ENCODE measurements at regions of chr5 and their contacts with region 1.

Region 1: DNA sequence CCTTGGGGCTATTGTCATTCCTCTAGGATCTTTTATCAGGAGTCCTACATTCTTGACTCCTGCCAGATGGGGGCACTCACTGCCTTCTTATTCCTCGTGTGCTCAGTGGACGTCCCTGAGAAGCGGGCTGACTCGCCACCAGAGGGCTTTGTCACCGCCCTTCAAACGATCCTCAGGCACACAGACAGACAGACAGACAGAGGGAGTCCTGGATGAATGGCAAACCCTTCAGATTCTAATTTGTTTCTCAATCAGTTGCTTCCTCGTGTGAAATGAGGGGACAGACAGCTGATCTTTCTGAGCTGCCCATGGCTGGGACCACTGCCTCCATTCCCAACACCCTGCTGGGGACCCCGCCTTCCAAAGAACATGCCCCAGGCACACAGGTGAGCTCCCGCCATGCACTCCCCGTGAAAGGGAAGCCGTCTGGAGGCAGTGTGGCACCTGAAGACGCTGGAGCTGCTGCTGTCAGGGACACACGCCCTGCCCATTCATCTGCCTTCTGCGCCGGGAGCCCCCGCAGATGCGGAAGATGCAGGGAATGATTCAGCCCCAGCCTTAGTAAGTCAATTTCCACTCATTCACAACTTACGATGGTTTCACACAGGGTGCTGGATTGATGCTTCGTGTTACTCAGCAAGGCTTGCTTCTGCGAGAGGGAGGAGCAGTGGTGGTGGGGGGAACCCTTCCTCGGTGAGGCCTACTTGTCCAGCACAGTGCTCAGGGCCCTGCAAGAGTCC is 24.9 kb upstream of the SH3PXD2B start:
- DNase-seq: peak; percentile 82 to 89
- H3K4me3 ChIP-seq: no peak overlapping the region
- H3K27ac ChIP-seq: peak overlapping the region; percentile 7 to 30
- H3K4me1 ChIP-seq: peaks cover 0 to 5% (median 0%) of the 10 kb centered on the region in 4 donors
- H3K27me3 ChIP-seq: no peaks in the 10 kb centered on the region
- CTCF ChIP-seq: peak; percentile 83 to 99

Region 2: DNA sequence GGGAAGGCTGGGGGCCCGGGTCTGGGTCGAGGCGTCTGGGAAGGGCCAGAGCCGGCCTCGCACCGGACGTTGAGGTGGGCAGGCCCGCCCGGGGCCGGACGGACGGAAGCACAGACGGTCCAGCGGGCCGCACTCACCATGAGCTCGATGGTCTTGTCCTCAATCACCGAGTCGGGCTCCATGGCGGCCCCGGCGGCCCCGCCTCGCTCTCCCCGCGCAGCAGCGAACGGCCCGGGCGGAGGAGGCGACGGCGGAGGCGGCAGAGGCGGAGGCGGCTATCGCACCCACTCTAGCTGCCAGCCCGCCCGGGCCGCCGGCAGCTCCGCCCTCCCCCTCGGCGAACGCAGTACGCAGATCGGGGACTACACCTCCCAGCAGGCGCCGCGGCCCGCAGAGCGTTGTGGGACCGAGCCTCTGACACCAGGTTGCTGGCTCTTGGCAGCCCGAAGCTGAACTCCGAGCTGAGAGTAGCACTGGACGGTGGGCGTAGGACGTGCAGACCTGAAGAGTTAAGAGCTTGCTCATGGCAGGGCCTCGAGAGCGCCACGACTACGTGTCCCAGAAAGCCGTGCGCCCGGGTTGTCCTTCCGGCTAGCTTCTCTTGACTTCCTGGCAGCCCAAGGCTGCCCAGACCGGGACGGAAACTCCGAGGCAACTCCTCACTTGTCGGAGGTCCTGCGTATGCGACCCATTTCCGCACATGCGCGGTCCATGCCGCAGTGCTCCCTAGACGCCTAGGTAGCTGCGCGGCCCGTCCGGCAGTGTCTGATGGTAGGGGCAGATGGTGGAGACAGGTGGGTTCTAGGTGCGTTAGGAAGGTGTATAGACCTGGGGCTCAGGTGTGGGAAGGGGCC is 472.7 kb before region 1 on chr5 and contains the start of gene FBXW11:
- intact Hi-C with region 1: no loop called
- DNase-seq: peak; percentile 97
- H3K4me3 ChIP-seq: peak within 1 kb of the TSS; percentile 92 to 97
- H3K27ac ChIP-seq: peak within 1 kb of the TSS; percentile 98
- H3K4me1 ChIP-seq: peaks cover 0 to 46% (median 36%) of the 10 kb centered on the region in 4 donors
- H3K27me3 ChIP-seq: no peaks in the 10 kb centered on the region
- CTCF ChIP-seq: no peak

Region 3: DNA sequence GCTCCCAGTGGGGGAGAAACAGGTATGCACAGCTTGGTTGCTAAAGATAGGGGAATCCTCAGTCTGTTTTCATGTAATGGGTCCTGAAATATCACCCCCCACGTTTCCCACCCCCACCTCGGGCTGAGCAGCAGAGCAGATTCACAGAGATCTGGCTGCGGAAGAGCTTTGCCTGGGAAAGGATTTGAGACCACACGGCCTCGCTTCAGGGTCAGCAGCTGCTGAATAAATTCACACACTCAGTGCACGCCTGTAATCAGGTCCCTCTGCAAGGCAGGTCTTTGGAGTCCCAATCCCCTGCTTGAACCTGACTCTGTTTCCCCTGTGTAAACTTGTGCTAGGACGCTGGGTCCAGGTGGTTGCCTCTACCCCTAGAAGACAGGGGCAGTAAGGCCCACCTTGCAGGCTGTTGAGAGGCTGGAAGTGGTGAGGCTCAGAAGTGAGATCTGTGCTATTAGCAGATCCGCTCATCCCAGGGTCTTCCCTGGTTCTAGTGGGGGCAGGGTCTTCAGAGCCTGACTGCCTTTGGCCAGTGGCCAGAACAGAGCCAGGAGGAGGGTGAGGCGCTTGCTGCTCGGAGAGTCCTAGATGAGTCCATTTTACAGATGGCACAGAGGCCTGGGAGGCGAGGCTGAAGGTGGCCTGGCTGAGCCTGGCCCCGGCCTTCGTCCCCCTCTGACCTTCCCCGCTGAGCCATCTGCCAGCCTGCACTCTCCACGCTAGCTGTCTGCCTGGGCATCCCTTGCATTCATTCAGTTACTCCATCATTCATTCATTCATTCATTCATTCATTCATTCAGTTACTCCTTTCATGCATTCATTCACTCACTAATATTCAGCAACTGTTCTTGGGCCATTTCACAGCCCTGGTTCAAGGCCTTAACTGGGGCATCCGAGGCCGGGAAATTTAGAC is 145.1 kb after region 1 on chr5:
- intact Hi-C with region 1: no loop called
- DNase-seq: peak in 1 of 2 donors; percentile 38
- H3K4me3 ChIP-seq: no peak overlapping the region
- H3K27ac ChIP-seq: no peak overlapping the region
- H3K4me1 ChIP-seq: no peaks in the 10 kb centered on the region
- H3K27me3 ChIP-seq: no peaks in the 10 kb centered on the region
- CTCF ChIP-seq: no peak

Region 4: DNA sequence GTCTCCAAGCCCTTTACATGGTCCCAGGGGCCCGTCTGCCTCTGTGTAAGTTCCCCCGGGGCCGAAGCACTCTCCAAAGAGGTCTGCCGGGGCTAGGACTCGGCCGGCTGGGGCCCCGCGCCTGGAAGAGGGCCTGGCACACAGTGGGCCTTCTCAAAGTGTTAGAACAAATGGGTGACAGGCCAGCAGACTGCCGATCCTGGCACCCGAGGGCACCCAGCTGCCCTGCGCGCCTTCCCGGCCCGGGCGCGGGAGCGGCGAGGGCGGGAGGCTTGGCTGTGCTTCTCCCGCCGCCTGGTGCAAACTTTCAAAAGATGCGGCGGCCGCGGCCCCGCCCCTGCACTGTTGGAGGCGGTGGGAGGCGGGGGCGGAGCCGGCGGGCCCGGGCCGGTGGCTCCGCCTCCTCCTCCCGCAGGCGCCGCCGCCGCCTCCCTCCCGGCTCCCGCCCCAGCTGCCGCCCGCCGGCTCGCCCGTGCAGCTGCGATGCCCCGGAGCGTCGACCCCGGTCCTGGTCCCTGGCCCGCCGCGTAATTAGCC is 161.7 kb after region 1 on chr5 and contains the start of gene NEURL1B:
- intact Hi-C with region 1: loop called (anchors 10 kb)
- DNase-seq: peak; percentile 52 to 83
- H3K4me3 ChIP-seq: peak within 1 kb of the TSS; percentile 74 to 92
- H3K27ac ChIP-seq: peak within 1 kb of the TSS; percentile 87 to 88
- H3K4me1 ChIP-seq: peaks cover 0 to 59% (median 47%) of the 10 kb centered on the region in 4 donors
- H3K27me3 ChIP-seq: no peaks in the 10 kb centered on the region
- CTCF ChIP-seq: peak in 1 of 2 experiments; percentile 25

Region 5: GRCh38 chr5:172697123-172698121 is 218.2 kb after region 1 on chr5:
- intact Hi-C with region 1: loop called (anchors 2 kb)
- DNase-seq: peak; percentile 89 to 93
- H3K4me3 ChIP-seq: peak overlapping the region; percentile 54 to 66
- H3K27ac ChIP-seq: peak overlapping the region; percentile 69 to 77
- H3K4me1 ChIP-seq: peaks cover 0 to 48% (median 45%) of the 10 kb centered on the region in 4 donors
- H3K27me3 ChIP-seq: peaks cover 0 to 3% of the 10 kb centered on the region in 2 donors
- CTCF ChIP-seq: peak; percentile 88 to 94

Region 6: DNA sequence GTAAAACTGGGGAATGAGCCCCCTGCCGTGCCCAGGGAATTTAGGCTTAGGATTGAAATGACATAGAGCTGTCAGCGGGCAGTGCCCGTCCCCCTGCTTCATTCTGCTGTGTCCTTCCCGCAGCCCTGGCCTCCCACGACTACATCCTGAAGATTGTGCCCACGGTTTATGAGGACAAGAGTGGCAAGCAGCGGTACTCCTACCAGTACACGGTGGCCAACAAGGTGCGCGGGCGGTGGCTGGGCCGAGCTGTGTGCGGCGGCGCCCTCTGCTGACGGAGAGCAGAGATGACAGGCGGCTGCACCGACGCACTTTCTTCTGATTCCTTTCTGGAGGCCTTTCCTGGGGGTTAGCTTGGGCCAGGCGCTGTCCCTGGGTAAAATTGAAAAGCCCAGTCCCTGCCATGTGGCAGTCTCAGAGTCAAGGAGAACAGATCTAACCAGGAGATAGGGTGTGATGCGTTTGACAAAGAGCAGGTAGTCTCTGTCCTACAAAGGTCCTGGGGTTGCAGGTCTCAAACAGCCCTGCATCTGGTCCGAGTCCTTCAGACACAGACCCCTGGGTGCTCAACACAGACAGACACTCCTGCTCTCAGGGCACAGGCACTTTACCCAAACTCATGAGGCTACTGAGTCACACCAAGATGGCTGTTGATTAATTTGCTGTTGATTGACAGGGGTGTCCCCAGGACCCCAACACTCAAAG is 453.3 kb after region 1 on chr5:
- intact Hi-C with region 1: loop called (anchors 10 kb)
- DNase-seq: peak; percentile 69 to 87
- H3K4me3 ChIP-seq: no peak overlapping the region
- H3K27ac ChIP-seq: peak overlapping the region; percentile 65 to 75
- H3K4me1 ChIP-seq: peaks cover 0 to 27% (median 21%) of the 10 kb centered on the region in 4 donors
- H3K27me3 ChIP-seq: no peaks in the 10 kb centered on the region
- CTCF ChIP-seq: peak; percentile 96 to 99